ENCODE measurements at regions of chr2 and their contacts with region 1.

Region 1: DNA sequence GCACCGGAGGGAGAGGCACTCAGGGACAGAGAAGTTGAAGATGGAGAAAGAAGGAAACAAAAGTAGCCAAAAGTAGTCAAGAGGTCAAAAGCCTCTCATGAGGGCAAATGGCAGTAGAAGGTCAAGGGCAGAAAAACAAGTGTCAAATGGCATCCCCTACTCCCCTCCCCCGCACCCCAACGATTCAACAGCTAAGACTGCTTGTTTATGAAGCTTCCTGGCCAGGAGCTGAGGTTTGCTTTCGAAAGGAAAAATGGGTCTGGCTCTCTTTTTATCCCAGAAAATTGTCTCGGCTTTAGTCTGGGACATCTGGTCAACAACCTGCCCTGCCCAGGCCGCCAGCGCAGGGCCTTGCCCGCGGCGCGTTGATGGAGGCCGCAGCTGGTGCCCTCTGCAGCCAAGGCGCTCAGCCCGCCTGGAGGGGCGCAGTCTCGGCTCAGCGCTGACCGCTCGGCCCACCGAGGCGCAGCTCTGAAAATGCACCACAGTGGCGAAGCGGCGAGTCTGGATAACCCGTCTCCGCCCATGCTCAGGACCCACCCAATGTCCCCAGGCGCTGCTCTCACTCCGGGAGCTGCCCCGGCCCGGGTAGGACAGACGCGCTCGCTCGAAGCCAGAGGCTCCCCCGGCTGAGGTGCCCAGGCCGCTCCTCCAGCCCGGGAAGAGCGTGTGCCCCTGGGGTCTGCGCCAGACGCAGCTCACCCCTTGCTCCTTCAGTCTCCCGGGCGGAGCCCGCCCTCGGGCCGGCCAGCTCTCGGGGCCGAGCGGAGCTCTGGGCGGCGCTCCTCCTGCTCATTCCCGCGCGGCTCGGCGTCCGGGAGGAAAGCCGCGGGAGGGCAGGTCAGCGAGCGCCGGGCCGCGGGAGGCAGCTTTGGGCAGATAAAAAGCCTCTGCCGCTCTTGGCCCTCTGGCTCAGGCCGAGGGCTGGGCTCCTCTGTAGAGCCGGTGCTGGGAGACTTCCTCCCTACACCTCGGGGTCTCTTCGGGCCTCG is 1.8 kb upstream of the TBR1 start:
- DNase-seq: no peak
- ATAC-seq: peak; percentile 56
- H3K4me3 Mint-ChIP-seq: peak overlapping the region; percentile 70
- H3K27ac Mint-ChIP-seq: no peak overlapping the region
- H3K4me1 Mint-ChIP-seq: peaks cover 50% of the 10 kb centered on the region
- H3K27me3 Mint-ChIP-seq: peaks cover 45% of the 10 kb centered on the region
- CTCF ChIP-seq: no peak

Region 2: GRCh38 chr2:161243905-161244304 is 170.4 kb before region 1 on chr2:
- CTCF ChIA-PET with region 1: no interaction called
- POLR2A ChIA-PET with region 1: no interaction called
- intact Hi-C with region 1: loop called (anchors 5 kb)
- DNase-seq: no peak
- ATAC-seq: no peak
- H3K4me3 Mint-ChIP-seq: peak overlapping the region; percentile 85
- H3K27ac Mint-ChIP-seq: peak overlapping the region; percentile 87
- H3K4me1 Mint-ChIP-seq: peaks cover 61% of the 10 kb centered on the region
- H3K27me3 Mint-ChIP-seq: no peaks in the 10 kb centered on the region
- CTCF ChIP-seq: no peak

Region 3: GRCh38 chr2:161426922-161427663 is 12.8 kb after region 1 on chr2:
- CTCF ChIA-PET with region 1: no interaction called
- POLR2A ChIA-PET with region 1: no interaction called
- intact Hi-C with region 1: loop called (anchors 1 kb)
- DNase-seq: no peak
- ATAC-seq: no peak
- H3K4me3 Mint-ChIP-seq: peak overlapping the region; percentile 68
- H3K27ac Mint-ChIP-seq: no peak overlapping the region
- H3K4me1 Mint-ChIP-seq: peaks cover 31% of the 10 kb centered on the region
- H3K27me3 Mint-ChIP-seq: peaks cover 63% of the 10 kb centered on the region
- CTCF ChIP-seq: no peak

Region 4: GRCh38 chr2:161625314-161625919 is 211.1 kb after region 1 on chr2:
- CTCF ChIA-PET with region 1: no interaction called
- POLR2A ChIA-PET with region 1: no interaction called
- intact Hi-C with region 1: no loop called
- DNase-seq: no peak
- ATAC-seq: no peak
- H3K4me3 Mint-ChIP-seq: no peak overlapping the region
- H3K27ac Mint-ChIP-seq: no peak overlapping the region
- H3K4me1 Mint-ChIP-seq: no peaks in the 10 kb centered on the region
- H3K27me3 Mint-ChIP-seq: peaks cover 13% of the 10 kb centered on the region
- CTCF ChIP-seq: no peak

Measured in activated B cell treated with CpG ODN at 0.5 μM for 24 hours (primary cell).